HCT116 (cell line): ENCODE measurements at regions of chr19 and their contacts with region 1.

Region 1: GRCh38 chr19:43950834-43951645 is at the start of gene ZNF221:
- DNase-seq: peak; percentile 95
- ATAC-seq: peak; percentile 96
- H3K4me3 ChIP-seq: peak within 1 kb of the TSS; percentile 73 to 80
- H3K27ac ChIP-seq: peak within 1 kb of the TSS; percentile 56
- H3K4me1 ChIP-seq: peaks cover 2 to 4% of the 10 kb centered on the region in 2 experiments; a peak in 3 of 4 replicates
- H3K27me3 ChIP-seq: no peaks in the 10 kb centered on the region
- CTCF ChIP-seq: peak in 2 of 3 experiments; percentile 49 to 58; a peak in 4 of 6 replicates
- POLR2A ChIP-seq: no peak
- RAD21 ChIP-seq: peak; percentile 57
- total RNA-seq, gene ZNF221: 2.5 TPM

Region 2: GRCh38 chr19:43839139-43839538 is 111.9 kb before region 1 on chr19:
- CTCF ChIA-PET with region 1: no interaction called
- POLR2A ChIA-PET with region 1: no interaction called
- RAD21 ChIA-PET with region 1: no interaction called
- intact Hi-C with region 1: no loop called
- DNase-seq: no peak
- ATAC-seq: no peak
- H3K4me3 ChIP-seq: no peak overlapping the region
- H3K27ac ChIP-seq: no peak overlapping the region
- H3K4me1 ChIP-seq: no peaks in the 10 kb centered on the region
- H3K27me3 ChIP-seq: no peaks in the 10 kb centered on the region
- CTCF ChIP-seq: no peak
- POLR2A ChIP-seq: no peak
- RAD21 ChIP-seq: no peak

Region 3: GRCh38 chr19:43934985-43935708 is 15.9 kb before region 1 on chr19 and contains the start of gene ZNF45:
- CTCF ChIA-PET with region 1: interaction called, 8 read pairs
- POLR2A ChIA-PET with region 1: interaction called, 6 read pairs
- RAD21 ChIA-PET with region 1: interaction called in 1 of 2 experiments, 4 read pairs
- intact Hi-C with region 1: loop called (anchors 1 kb)
- DNase-seq: peak; percentile 78
- ATAC-seq: peak; percentile 95
- H3K4me3 ChIP-seq: peak within 1 kb of the TSS; percentile 58 to 71
- H3K27ac ChIP-seq: peak within 1 kb of the TSS; percentile 58
- H3K4me1 ChIP-seq: peaks cover 5 to 14% of the 10 kb centered on the region in 2 experiments
- H3K27me3 ChIP-seq: no peaks in the 10 kb centered on the region
- CTCF ChIP-seq: no peak
- POLR2A ChIP-seq: no peak
- RAD21 ChIP-seq: no peak
- total RNA-seq, gene ZNF45: 15.2 TPM

Region 4: GRCh38 chr19:44002566-44003460 is 51.8 kb after region 1 on chr19 and contains the start of gene ZNF230:
- CTCF ChIA-PET with region 1: no interaction called
- POLR2A ChIA-PET with region 1: no interaction called
- RAD21 ChIA-PET with region 1: no interaction called
- intact Hi-C with region 1: loop called (anchors 1 kb)
- DNase-seq: peak; percentile 92
- ATAC-seq: peak; percentile 95
- H3K4me3 ChIP-seq: peak within 1 kb of the TSS; percentile 86 to 88
- H3K27ac ChIP-seq: 0 out of 2 replicates have a peak within 1 kb of the TSS, but pooled peaks have one; percentile 0
- H3K4me1 ChIP-seq: peaks cover 0 to 13% of the 10 kb centered on the region in 2 experiments; a peak in 2 of 4 replicates
- H3K27me3 ChIP-seq: no peaks in the 10 kb centered on the region
- CTCF ChIP-seq: no peak
- POLR2A ChIP-seq: no peak
- RAD21 ChIP-seq: no peak
- total RNA-seq, gene ZNF230: 2.8 TPM